Cardiac septum (tissue), 1 donor: ENCODE measurements at regions of chr1 and their contacts with region 1.

Region 1: DNA sequence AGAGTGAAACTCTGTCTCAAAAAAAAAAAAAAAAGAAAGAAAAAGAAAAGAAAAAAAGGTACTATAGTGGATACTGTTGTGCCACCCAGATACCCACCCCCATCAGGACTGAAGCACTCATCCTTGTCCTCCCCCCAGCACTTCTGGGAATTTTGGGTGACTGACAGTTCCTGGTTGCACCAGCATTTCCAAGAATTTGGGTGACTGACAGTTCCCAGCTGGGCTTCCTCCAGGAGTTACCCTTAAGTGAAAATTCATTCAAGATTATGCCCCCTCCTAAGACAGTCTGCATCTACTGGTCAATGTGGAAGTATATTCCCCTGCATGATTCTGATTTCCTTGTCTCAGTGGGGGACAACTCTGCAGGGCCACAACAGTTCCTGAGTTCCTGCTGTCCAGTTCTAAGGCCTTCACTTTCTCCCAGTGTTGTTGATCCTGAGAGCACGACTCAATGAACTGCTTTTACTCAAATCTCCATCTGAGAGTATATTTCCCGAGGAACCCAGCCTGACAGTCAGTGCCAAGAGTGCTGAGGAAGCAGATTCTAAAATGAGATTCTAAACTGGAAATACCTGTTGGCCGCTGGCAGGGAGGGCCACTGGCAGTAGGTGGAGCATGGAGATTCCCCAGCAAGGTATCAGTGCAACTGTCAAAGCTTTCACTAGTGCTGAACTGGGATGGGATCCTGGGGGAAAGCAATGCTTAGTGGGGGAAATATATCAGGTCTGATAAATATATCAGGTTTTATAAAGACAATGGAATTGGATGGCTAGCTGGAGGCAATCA is 18.5 kb downstream of the RIIAD1 start:
- DNase-seq: peak; percentile 53

Region 2: GRCh38 chr1:151443846-151444782 is 295.7 kb before region 1 on chr1:
- intact Hi-C with region 1: loop called (anchors 5 kb)
- DNase-seq: no peak

Region 3: DNA sequence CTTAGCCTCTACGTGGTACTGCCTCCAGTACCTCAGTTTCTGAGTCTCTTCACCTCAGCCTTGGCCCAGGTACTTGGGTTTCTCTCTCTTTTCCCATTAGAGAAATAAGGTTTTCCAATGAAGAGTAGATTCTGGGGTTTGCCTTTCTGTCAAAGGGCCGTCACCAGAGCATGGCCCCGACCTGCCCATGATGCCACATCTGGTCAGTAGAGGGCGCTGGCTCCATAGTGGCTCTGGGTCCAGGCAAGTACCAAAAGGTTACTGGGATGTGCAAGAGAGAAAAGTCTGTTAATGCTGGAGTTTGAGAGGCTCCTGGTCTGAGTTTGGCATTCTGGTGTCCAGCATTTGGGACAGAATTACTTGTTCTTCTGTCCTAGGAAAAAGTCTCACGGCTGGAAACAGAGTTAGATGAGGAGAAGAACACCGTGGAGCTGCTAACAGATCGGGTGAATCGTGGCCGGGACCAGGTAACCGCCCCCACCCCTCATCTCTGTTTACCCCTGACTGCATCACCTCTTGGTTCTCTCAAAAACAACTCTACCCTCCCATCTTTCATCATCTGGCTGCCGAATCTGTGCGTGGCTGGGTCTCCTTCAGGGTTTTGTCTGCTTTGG is 205.0 kb before region 1 on chr1:
- intact Hi-C with region 1: loop called (anchors 1 kb)
- DNase-seq: peak; percentile 91

Region 4: DNA sequence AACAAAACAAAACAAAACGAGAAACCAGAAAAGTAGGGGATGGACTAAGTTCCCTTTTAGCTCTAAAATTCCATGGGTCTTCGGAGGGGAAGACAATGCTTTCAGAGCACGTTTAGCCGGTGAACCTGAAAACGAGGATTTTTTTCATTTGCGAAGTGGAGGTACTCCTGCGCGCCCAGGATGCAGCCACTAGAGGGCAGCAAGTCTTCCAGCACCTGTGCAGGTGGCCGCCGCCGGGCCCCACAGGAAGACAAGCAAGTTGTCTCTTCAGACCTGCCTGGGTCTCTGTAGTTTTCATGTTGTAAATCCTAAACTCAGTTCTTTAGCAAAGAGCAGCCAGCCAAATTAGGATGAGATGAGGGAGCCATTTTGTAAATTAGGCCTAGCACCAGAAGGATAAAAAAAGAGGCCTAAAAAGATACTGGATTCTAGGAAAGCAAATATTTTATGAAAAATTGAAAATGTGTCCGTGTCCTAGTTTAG is 145.6 kb before region 1 on chr1:
- intact Hi-C with region 1: loop called (anchors 2 kb)
- DNase-seq: peak; percentile 91

Region 5: GRCh38 chr1:151693076-151693651 is 46.6 kb before region 1 on chr1:
- intact Hi-C with region 1: loop called (anchors 1 kb)
- DNase-seq: no peak

Region 6: GRCh38 chr1:151839457-151840405 is 99.9 kb after region 1 on chr1 and contains the start of gene C2CD4D:
- intact Hi-C with region 1: loop called (anchors 10 kb)
- DNase-seq: no peak
- total RNA-seq, gene C2CD4D: not detected